Activated B cell treated with CpG ODN at 0.5 μM for 24 hours (primary cell): ENCODE measurements at regions of chr2 and their contacts with region 1.

Region 1: DNA sequence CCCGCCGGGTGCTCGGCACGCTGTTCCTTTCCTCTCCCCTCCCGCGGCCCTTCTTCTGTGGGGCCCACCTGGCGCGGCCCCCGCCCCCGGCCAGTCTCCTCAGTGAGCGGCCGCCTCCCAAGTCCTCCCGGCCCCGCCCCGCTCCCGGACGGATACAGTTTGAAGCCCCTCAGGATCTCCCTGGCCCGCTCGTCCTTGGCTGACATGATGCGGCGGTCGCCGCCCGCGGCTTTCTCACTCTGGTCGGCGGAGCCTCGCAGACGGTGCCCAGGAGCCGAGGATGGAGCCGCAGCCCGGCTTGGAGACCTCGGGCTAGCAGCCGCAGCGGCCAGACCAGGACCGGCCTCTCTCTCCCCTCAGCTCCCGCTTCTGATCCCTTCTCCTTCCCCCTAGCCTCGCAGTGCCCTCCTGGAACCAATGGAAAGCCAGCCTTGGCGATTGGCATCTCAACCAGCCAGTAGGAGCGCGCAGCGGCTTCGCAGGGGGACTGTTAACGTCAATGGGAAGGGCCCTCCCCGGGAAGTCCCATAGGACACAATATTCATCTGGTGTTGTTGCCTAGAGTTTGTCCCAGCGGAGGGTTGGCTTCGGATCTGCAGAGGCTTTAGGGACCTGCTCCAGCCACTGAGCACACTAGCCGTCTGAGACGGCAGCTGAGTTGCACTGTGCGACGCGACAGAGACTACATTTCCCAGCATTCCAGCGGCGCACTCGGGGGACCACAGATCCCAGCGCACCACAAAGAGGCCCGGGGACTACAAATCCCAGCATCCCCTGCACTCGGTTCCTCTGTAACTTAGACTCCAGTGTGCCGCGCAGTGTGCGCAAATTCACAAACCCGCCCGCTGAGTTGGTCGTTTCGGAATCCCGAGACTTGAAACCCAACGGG is at the start of gene PDE6D:
- DNase-seq: peak; percentile 95
- ATAC-seq: peak; percentile 89
- H3K4me3 Mint-ChIP-seq: peak within 1 kb of the TSS; percentile 99
- H3K27ac Mint-ChIP-seq: peak within 1 kb of the TSS; percentile 96
- H3K4me1 Mint-ChIP-seq: peaks cover 52% of the 10 kb centered on the region
- H3K27me3 Mint-ChIP-seq: no peaks in the 10 kb centered on the region
- CTCF ChIP-seq: no peak
- total RNA-seq, gene PDE6D: 35.7 and 41.3 TPM in 2 replicates

Region 2: DNA sequence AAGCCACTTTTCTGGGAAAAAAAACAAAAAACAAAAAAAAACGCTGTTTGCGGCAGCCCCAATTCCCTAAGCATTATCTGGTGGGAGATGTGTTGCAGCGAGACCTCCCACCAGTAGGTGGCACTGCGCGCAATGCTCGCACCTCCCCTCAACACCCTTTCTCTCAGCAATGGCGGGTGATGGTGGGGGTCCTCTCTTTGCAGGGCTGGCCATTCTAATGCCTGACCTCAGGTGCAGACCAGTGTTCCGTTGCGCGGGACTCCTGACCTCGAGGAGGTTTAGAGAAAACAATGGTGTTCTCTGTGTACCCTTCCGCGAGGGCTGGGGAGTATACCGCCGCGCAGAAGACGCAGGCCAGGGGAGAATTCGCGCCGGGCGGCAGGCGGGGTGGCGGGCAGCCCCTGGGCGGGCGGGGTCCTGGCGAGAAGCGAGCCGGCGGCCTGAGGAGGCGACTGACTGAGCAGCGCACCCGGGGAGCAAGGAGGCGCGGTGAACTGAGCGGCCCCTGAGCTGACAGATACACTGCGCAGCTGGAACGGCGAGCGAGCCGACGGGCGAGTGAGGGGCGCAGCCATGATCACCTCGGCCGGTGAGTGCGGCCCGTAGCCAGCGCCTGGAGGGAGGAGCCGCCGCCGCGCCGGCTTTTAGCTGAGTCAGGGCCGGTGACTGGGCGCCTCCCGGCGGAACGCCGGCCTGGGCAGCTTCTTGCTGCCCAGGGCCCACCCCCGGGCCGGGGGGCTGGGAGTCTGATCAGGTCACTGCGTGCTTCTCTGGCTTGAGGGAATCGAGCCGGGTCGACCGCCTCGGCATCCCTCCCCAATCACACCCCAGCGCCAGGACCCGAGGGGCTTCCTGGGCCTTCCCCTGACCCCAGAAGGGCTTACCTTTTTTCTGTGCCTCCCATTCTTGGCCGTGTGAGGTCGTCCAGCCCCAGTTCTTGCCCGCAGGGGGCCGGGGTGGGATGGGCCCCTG is 724.4 kb before region 1 on chr2 and contains the start of gene PSMD1:
- CTCF ChIA-PET with region 1: no interaction called
- POLR2A ChIA-PET with region 1: no interaction called
- intact Hi-C with region 1: loop called (anchors 10 kb)
- DNase-seq: peak; percentile 90
- ATAC-seq: peak; percentile 85
- H3K4me3 Mint-ChIP-seq: peak within 1 kb of the TSS; percentile 98
- H3K27ac Mint-ChIP-seq: peak within 1 kb of the TSS; percentile 100
- H3K4me1 Mint-ChIP-seq: peaks cover 43% of the 10 kb centered on the region
- H3K27me3 Mint-ChIP-seq: peaks cover 3% of the 10 kb centered on the region
- CTCF ChIP-seq: peak; percentile 65
- total RNA-seq, gene PSMD1: 99.9 and 105 TPM in 2 replicates

Region 3: DNA sequence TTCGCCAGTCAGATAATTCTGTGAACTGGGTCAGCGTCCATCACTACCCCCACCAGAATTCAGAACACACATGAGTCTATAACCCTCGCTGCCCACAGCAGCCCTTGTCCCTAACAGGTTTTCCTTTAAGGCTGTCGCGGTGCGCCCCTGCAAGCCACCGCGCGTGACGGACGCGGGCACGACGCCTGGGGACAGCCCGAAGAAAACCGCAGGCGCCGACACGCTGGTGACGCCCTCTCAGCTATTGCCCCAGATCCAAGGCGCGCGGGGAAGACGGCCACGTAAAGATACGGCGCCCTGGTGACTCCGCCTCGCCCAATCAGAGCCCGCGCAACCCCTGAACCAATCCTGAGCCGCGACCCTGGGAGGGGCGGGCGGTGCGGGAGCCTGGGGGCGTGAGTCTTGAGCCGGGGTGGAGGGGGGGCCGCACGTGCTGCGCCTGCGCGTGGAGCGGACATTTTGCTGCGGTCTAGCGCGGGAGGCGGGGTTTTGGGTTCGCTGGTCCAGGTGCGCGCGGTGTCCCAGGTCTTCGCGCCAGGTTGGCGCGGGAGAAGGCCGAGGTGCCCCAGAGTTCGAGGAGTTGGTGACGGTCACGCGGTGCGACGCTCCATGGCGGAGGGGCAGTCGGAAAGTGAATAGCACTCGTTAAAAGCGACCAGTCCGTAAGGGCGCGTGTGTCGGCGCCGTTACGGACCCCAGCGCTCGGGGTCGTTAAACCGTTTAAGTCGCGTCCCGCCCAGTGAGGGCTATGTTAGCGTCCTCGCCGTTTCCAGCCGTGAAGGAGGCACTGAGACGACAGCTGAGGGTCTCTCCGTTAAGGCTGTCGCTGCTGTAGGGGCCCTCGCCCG is 266.8 kb before region 1 on chr2:
- CTCF ChIA-PET with region 1: no interaction called
- POLR2A ChIA-PET with region 1: no interaction called
- intact Hi-C with region 1: loop called (anchors 2 kb)
- DNase-seq: peak; percentile 97
- ATAC-seq: peak; percentile 99
- H3K4me3 Mint-ChIP-seq: peak overlapping the region; percentile 92
- H3K27ac Mint-ChIP-seq: peak overlapping the region; percentile 96
- H3K4me1 Mint-ChIP-seq: peaks cover 13% of the 10 kb centered on the region
- H3K27me3 Mint-ChIP-seq: no peaks in the 10 kb centered on the region
- CTCF ChIP-seq: no peak

Region 4: GRCh38 chr2:231713730-231714430 is 67.3 kb before region 1 on chr2:
- CTCF ChIA-PET with region 1: interaction called, 7 read pairs
- POLR2A ChIA-PET with region 1: interaction called, 13 read pairs
- intact Hi-C with region 1: loop called (anchors 1 kb)
- DNase-seq: peak; percentile 82
- ATAC-seq: peak; percentile 15
- H3K4me3 Mint-ChIP-seq: peak overlapping the region; percentile 55
- H3K27ac Mint-ChIP-seq: peak overlapping the region; percentile 91
- H3K4me1 Mint-ChIP-seq: peaks cover 70% of the 10 kb centered on the region
- H3K27me3 Mint-ChIP-seq: no peaks in the 10 kb centered on the region
- CTCF ChIP-seq: no peak

Region 5: GRCh38 chr2:231720987-231721966 is 59.9 kb before region 1 on chr2:
- CTCF ChIA-PET with region 1: interaction called, 7 read pairs
- POLR2A ChIA-PET with region 1: interaction called, 13 read pairs
- intact Hi-C with region 1: loop called (anchors 1 kb)
- DNase-seq: no peak
- ATAC-seq: peak; percentile 36
- H3K4me3 Mint-ChIP-seq: peak overlapping the region; percentile 5
- H3K27ac Mint-ChIP-seq: peak overlapping the region; percentile 16
- H3K4me1 Mint-ChIP-seq: peaks cover 44% of the 10 kb centered on the region
- H3K27me3 Mint-ChIP-seq: no peaks in the 10 kb centered on the region
- CTCF ChIP-seq: no peak

Region 6: GRCh38 chr2:231961349-231962166 is 180.4 kb after region 1 on chr2 and contains the start of gene DIS3L2:
- CTCF ChIA-PET with region 1: no interaction called
- POLR2A ChIA-PET with region 1: interaction called, 5 read pairs
- intact Hi-C with region 1: loop called (anchors 5 kb)
- DNase-seq: peak; percentile 74
- ATAC-seq: peak; percentile 95
- H3K4me3 Mint-ChIP-seq: peak within 1 kb of the TSS; percentile 97
- H3K27ac Mint-ChIP-seq: peak within 1 kb of the TSS; percentile 80
- H3K4me1 Mint-ChIP-seq: peaks cover 37% of the 10 kb centered on the region
- H3K27me3 Mint-ChIP-seq: no peaks in the 10 kb centered on the region
- CTCF ChIP-seq: no peak
- total RNA-seq, gene DIS3L2: 59.9 and 65.9 TPM in 2 replicates

Region 7: DNA sequence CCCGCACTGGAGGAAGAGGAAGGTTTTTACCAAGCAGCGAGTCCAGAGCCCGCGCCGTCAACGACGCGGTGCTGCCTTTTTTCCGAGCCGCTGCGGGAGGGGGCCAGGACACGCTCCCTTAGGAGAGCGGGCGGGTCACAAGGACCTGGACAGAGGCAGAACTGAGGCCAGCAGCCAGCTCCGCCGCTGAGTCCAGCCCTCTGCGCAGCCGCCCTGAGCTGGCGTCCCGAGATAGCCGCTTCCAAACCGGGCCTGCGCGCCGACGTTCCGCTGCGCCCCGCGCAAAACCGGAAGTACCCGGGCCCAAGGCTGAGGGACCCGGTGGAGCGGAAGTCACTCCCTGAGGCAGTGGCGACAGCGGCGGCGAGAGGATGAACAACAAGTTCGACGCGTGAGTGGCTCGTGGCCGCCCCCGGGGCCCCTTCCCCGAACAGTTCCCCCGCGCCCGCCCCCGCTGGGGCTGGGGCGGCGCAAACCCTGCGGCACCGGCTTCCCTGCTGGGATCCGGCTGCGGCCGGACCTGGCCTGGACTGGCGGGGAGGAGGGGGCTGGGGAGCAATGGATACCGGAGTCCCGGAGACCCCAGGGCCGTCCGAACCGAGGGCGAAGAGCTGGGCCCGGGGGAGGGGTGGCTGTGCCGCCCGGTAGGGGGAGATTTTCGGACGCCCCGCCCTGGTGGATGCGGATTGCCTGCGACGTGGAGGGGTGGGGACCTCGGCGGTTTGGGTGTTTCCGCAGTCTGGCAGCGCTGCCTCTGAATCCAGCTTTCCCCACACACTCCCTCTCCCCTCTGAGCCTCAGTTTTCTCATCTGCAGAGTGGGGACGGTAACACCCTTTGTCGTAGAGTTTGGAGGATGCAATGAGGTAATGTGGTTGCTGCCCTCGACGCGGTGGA is 769.4 kb after region 1 on chr2 and contains the starts of genes EIF4E2 and TIGD1:
- CTCF ChIA-PET with region 1: no interaction called
- POLR2A ChIA-PET with region 1: interaction called, 3 read pairs
- intact Hi-C with region 1: loop called (anchors 1 kb)
- DNase-seq: peak; percentile 86
- ATAC-seq: peak; percentile 85
- H3K4me3 Mint-ChIP-seq: peak within 1 kb of the TSS; percentile 98
- H3K27ac Mint-ChIP-seq: peak within 1 kb of the TSS; percentile 99
- H3K4me1 Mint-ChIP-seq: peaks cover 63% of the 10 kb centered on the region
- H3K27me3 Mint-ChIP-seq: no peaks in the 10 kb centered on the region
- CTCF ChIP-seq: no peak
- total RNA-seq, gene EIF4E2: 63.2 and 67.2 TPM in 2 replicates
- total RNA-seq, gene TIGD1: 8.1 and 8.8 TPM in 2 replicates